Cardiac septum (tissue), 1 donor: ENCODE measurements at regions of chr18 and their contacts with region 1.

Region 1: GRCh38 chr18:75247611-75248421 is 37.2 kb downstream of the TSHZ1 start:
- DNase-seq: no peak

Region 2: GRCh38 chr18:75226286-75226955 is 21.4 kb before region 1 on chr18:
- intact Hi-C with region 1: loop called (anchors 2 kb)
- DNase-seq: no peak